ENCODE measurements at regions of chr11 and their contacts with region 1.

Region 1: DNA sequence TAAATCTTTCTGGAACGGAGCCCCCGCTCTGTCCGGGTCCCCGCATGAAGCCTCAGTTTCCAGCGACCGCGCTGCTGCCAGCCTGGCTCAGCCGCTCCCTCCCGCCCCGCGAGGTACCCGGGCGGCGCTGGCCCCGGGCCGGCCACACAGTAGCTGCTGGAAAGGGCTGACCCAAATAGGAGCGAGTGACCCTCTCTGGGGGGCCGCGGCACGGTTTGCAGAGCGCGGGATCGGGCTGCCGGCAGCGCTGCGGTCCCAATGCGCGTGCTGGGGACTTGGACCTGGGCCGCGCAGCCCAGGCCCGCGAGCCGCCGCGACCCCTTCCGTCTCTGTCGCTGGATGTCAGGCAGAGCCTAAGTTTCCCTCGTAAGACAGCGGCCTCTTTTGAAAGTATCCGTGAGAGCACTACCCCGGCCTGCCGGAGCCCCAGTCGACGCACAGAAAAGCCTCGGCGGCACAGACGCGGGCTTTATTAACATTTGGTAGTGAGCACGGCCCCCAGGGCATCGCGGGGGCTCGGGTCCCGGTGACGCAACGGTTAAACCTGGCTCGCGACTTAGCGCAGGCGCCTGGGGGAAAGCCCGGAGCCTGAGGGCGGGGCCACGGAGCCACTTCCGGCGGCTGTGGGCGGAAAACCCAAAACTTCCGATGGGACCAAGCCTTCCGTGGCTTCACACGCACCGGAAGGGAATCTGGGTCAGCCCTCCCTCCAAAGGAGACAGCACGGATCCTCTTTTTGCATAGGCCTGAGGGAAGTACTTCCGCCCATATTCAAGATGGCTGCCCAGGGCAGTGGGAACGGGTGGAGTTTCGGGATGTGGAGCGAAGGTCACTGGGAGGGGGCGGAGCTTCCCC is 14.9 kb downstream of the BAD start:
- DNase-seq: peak; percentile 91
- CTCF ChIP-seq: no peak

Region 2: GRCh38 chr11:64246871-64247728 is 22.5 kb before region 1 on chr11 and contains the start of gene PPP1R14B:
- CTCF ChIA-PET with region 1: interaction called, 134 read pairs
- POLR2A ChIA-PET with region 1: interaction called, 7 read pairs
- DNase-seq: peak; percentile 85
- CTCF ChIP-seq: no peak

Region 3: GRCh38 chr11:64284048-64284961 is 14.7 kb after region 1 on chr11 and contains the start of gene BAD:
- CTCF ChIA-PET with region 1: interaction called, 21 read pairs
- POLR2A ChIA-PET with region 1: interaction called, 11 read pairs
- DNase-seq: peak; percentile 99
- CTCF ChIP-seq: peak; percentile 0

Region 4: GRCh38 chr11:64347182-64347867 is 77.7 kb after region 1 on chr11:
- CTCF ChIA-PET with region 1: no interaction called
- POLR2A ChIA-PET with region 1: no interaction called
- DNase-seq: no peak
- CTCF ChIP-seq: no peak

Measured in GM10248 (cell line).